Dendritic cell treated with granulocyte-macrophage colony-stimulating factor and Interleukin-4, amounts not matched to agents 40 ng/mL and 50 ng/mL, for 4 days (primary cell): ENCODE measurements at regions of chr18 and their contacts with region 1.

Region 1: GRCh38 chr18:35005963-35006577 is 35.1 kb upstream of the MAPRE2 start:
- H3K4me3 Mint-ChIP-seq: no peak overlapping the region
- H3K27ac Mint-ChIP-seq: no peak overlapping the region
- H3K4me1 Mint-ChIP-seq: no peaks in the 10 kb centered on the region
- H3K27me3 Mint-ChIP-seq: no peaks in the 10 kb centered on the region

Region 2: GRCh38 chr18:35143622-35144596 is 137.8 kb after region 1 on chr18:
- intact Hi-C with region 1: loop called (anchors 1 kb)
- H3K4me3 Mint-ChIP-seq: no peak overlapping the region
- H3K27ac Mint-ChIP-seq: no peak overlapping the region
- H3K4me1 Mint-ChIP-seq: peaks cover 10% of the 10 kb centered on the region
- H3K27me3 Mint-ChIP-seq: no peaks in the 10 kb centered on the region

Region 3: GRCh38 chr18:35231052-35231451 is 225.0 kb after region 1 on chr18:
- intact Hi-C with region 1: loop called (anchors 10 kb)
- H3K4me3 Mint-ChIP-seq: no peak overlapping the region
- H3K27ac Mint-ChIP-seq: no peak overlapping the region
- H3K4me1 Mint-ChIP-seq: peaks cover 4% of the 10 kb centered on the region
- H3K27me3 Mint-ChIP-seq: no peaks in the 10 kb centered on the region

Region 4: DNA sequence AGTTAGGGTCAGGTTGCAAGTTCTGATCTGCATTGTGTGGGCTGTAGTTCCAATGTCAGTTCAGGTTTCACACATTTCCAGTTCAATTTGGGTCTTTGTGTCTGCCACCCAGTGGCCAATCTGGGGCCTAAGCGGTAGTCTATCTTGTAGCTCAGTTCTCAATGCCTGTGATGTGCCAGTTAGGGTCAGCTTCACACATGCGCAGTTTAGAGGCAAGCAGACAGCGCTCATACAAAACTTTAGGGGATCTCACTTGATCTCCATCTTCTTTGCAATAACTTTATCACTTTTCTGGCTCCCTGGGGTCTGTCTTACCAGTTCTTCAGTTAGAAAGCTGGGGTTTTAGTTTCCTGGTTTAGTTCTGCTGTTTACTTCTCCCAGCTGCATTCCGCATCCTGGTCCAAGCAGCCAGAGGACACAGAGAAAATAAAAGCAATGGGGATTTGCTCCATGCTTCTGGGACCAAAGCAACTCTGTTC is 349.1 kb after region 1 on chr18:
- intact Hi-C with region 1: loop called (anchors 5 kb)
- H3K4me3 Mint-ChIP-seq: no peak overlapping the region
- H3K27ac Mint-ChIP-seq: no peak overlapping the region
- H3K4me1 Mint-ChIP-seq: no peaks in the 10 kb centered on the region
- H3K27me3 Mint-ChIP-seq: no peaks in the 10 kb centered on the region

Region 5: GRCh38 chr18:35730691-35731370 is 724.8 kb after region 1 on chr18:
- intact Hi-C with region 1: no loop called
- H3K4me3 Mint-ChIP-seq: no peak overlapping the region
- H3K27ac Mint-ChIP-seq: no peak overlapping the region
- H3K4me1 Mint-ChIP-seq: no peaks in the 10 kb centered on the region
- H3K27me3 Mint-ChIP-seq: peaks cover 3% of the 10 kb centered on the region